ENCODE measurements at regions of chr3 and their contacts with region 1.

Region 1: DNA sequence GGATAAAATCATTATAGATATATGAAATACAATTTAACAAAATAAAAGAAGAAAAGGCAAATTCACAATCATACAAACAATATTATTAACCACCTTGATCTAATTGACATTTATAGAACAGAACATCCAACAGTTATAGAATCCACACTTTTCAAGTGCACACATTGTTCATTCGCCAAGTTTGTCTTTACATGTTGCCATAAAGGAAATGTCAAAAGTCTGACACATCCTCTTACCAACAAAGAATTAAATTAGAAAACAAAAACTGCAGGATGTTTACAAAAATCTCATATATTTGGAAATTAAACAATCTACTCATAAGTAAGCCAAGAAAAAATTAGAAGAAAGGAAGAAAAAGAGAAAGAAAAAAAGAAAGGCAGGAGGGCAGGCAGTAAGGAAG is 909.2 kb upstream of the EPHA6 start:
- DNase-seq: peak; percentile 27
- H3K4me3 ChIP-seq: no peak overlapping the region
- H3K27ac ChIP-seq: no peak overlapping the region
- H3K4me1 ChIP-seq: peaks cover 8% of the 10 kb centered on the region
- H3K27me3 ChIP-seq: no peaks in the 10 kb centered on the region
- CTCF ChIP-seq: no peak
- POLR2A ChIP-seq: no peak

Region 2: GRCh38 chr3:95923496-95924210 is 18.5 kb after region 1 on chr3:
- CTCF ChIA-PET with region 1: no interaction called
- POLR2A ChIA-PET with region 1: no interaction called
- dilution Hi-C with region 1: no loop called
- intact Hi-C with region 1: loop called (anchors 1 kb)
- DNase-seq: peak; percentile 78
- H3K4me3 ChIP-seq: no peak overlapping the region
- H3K27ac ChIP-seq: peak overlapping the region; percentile 76
- H3K4me1 ChIP-seq: peaks cover 3% of the 10 kb centered on the region
- H3K27me3 ChIP-seq: no peaks in the 10 kb centered on the region
- CTCF ChIP-seq: no peak
- POLR2A ChIP-seq: no peak

Measured in endothelial cell of umbilical vein (primary cell).